Activated naive CD8-positive, alpha-beta T cell treated with anti-CD3 and anti-CD28 coated beads, Interleukin-2, amount 10 ng/mL, durations not matched to agents 7 days and 5 days (primary cell): ENCODE measurements at regions of chr7 and their contacts with region 1.

Region 1: GRCh38 chr7:39566023-39566921 is at the start of gene YAE1:
- DNase-seq: peak; percentile 84
- ATAC-seq: peak; percentile 94
- H3K4me3 Mint-ChIP-seq: peak within 1 kb of the TSS; percentile 100
- H3K27ac Mint-ChIP-seq: peak within 1 kb of the TSS; percentile 100
- H3K4me1 Mint-ChIP-seq: peaks cover 18% of the 10 kb centered on the region
- H3K27me3 Mint-ChIP-seq: peaks cover 4% of the 10 kb centered on the region
- total RNA-seq, gene YAE1: 17.7 to 20.1 TPM

Region 2: GRCh38 chr7:39732837-39733804 is 166.8 kb after region 1 on chr7:
- POLR2A ChIA-PET with region 1: interaction called, 10 read pairs
- DNase-seq: peak; percentile 90
- ATAC-seq: peak; percentile 97
- H3K4me3 Mint-ChIP-seq: peak overlapping the region; percentile 83
- H3K27ac Mint-ChIP-seq: peak overlapping the region; percentile 96
- H3K4me1 Mint-ChIP-seq: peaks cover 32% of the 10 kb centered on the region
- H3K27me3 Mint-ChIP-seq: peaks cover under 1% of the 10 kb centered on the region